Lower leg skin (tissue), 4 donors: ENCODE measurements at regions of chr17 and their contacts with region 1.

Region 1: GRCh38 chr17:64994776-64995538 is 61.6 kb downstream of the GNA13 start:
- DNase-seq: peak in 1 of 2 donors; percentile 53
- H3K4me3 ChIP-seq: no peak overlapping the region
- CTCF ChIP-seq: no peak
- POLR2A ChIP-seq: no peak

Region 2: DNA sequence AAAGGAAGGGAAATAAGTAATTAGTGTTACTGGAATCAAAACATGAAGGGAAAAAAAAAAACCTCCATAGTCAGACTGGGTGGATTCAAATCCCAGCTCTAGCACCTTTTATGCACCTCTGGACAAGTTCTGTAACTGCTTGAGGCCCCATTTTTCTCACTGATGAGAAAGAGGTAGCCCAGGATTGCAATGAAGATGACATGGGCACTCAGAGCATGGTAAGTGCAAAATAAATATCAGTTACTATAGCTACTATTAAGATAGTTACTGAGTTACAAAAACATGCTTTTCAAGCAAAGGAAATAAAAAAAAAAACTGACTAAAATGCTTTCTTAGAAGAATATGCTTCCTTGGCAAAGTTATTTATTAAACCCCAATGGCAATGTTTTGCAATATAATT is 429.4 kb before region 1 on chr17:
- intact Hi-C with region 1: no loop called
- DNase-seq: no peak
- H3K4me3 ChIP-seq: no peak overlapping the region
- CTCF ChIP-seq: no peak
- POLR2A ChIP-seq: no peak

Region 3: DNA sequence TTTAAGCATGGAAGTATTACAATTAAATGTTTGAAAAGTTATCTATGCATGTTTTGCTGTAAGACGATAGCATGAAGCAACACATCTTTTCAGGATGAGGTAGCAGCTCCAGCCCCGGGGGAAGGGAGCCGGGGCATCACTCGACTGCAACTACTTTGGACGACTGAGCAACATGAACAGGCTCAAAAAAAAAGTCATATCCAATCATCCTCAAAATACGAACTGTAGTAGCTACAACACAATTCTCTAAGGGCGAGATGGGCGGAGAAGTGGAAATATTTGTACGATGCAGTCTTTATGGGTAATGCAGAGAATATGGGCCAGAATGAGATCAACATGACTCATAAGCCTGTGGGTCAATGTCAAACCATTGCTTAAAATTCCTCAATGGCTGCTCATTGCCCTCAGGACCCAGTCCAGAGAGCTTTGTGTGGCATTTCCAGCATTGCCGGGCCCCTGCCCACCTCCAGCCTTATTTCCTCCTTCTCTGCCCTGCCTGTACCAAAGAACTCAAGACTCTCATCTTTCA is 315.2 kb before region 1 on chr17:
- intact Hi-C with region 1: no loop called
- DNase-seq: no peak
- H3K4me3 ChIP-seq: no peak overlapping the region
- CTCF ChIP-seq: no peak
- POLR2A ChIP-seq: no peak

Region 4: DNA sequence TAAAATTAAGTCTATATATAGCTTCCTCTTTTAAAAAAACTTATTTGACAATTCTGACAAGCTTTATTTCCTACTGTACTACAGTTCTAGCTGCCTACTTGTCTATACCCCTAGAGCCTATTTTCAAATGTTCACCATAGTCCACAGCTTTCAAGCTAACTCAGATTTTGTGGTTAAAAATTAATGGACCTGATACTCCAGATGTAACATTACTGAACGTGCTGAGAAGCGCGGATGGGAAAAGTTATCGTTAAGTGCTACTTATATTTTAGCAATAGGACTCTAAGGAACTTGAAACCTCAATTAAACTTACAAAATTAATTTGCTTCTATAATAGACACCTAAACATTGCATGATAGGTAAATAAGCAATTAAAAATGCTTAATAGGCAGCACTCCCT is 30.3 kb after region 1 on chr17:
- intact Hi-C with region 1: loop called (anchors 1 kb)
- DNase-seq: no peak
- H3K4me3 ChIP-seq: no peak overlapping the region
- CTCF ChIP-seq: no peak
- POLR2A ChIP-seq: no peak

Region 5: DNA sequence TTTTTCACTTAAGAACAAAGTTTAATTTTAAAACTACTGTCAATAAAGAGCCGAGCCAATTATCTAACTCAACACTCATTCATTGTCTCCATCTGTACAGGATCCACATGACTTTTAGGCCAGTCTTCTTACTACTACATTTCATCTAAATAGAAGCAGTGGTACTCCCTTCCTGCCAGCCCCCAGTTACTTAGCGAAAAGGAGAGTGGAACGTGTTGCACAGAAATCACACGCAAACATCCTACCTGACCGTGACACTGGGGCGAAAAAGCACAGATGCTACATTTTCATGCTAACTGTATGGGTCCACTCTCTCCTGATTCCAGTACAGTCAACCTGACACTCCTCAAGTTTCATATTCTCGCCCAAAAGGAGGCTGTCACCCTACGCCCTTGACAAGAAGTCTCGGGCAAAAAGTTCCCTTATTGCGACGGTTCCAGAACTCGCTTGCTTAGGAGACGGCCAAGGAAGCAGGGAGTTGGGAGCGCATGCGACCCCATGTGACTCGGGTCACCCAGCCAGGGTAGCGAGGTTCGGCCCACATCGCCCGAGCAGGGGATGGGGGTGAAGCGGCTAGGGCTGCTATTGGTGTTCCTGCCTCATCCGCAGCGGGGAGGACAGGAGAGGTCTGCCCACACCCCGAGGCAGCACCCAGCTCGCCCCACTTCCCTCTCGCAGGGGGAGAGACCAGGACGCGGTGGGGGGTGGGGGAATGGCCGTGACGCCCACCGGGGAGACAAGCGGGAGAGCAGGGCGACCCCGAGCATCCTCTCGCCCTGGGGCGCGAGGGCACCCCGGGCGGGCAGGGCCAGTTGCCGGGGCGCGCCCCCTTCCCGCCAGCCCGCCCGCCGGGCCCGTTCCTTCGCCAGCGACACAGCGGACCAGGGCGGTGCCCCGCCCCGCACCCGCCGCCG is 60.6 kb after region 1 on chr17:
- intact Hi-C with region 1: no loop called
- DNase-seq: peak; percentile 77 to 94
- H3K4me3 ChIP-seq: peak overlapping the region; percentile 64
- CTCF ChIP-seq: no peak
- POLR2A ChIP-seq: no peak